ENCODE measurements at regions of chr20 and their contacts with region 1.

Region 1: GRCh38 chr20:4607287-4607713 is 114.4 kb upstream of the PRND start:
- DNase-seq: no peak
- H3K4me3 ChIP-seq: no peak overlapping the region
- H3K27ac ChIP-seq: peak overlapping the region in 3 of 4 donors; percentile 38 to 84 (median 50)
- H3K4me1 ChIP-seq: peaks cover 0 to 49% (median 27%) of the 10 kb centered on the region in 4 donors
- H3K27me3 ChIP-seq: no peaks in the 10 kb centered on the region
- CTCF ChIP-seq: peak; percentile 93 to 97 (median 94)
- EP300 ChIP-seq: no peak
- POLR2A ChIP-seq: no peak

Region 2: DNA sequence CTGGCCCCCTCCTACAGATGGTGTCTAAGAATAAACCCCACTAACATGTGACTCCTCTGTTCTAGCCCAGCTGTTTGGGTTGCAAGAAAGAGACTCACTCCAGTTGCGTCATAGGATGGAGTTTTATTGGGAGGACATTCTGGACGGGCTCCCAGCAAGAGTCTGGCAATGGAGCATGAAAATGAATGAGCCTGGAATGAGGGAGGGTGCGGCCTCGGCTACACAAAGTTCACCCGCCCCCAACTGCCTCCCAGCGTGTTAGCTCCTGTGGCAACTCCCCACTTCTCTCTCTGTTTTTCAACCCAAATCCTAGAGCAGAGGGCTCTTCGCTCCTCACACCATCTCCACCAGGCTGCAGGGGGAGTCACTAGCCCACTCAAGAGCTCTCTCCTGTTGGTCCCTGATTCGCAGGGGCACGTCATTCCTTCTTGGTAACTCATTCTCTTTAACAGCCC is 920.4 kb before region 1 on chr20:
- intact Hi-C with region 1: loop called (anchors 10 kb)
- DNase-seq: peak; percentile 97
- H3K4me3 ChIP-seq: no peak overlapping the region
- H3K27ac ChIP-seq: peak overlapping the region; percentile 77 to 89 (median 79)
- H3K4me1 ChIP-seq: peaks cover 0 to 38% (median 30%) of the 10 kb centered on the region in 4 donors
- H3K27me3 ChIP-seq: no peaks in the 10 kb centered on the region
- CTCF ChIP-seq: no peak
- EP300 ChIP-seq: peak; percentile 69 to 95 (median 74)
- POLR2A ChIP-seq: no peak

Region 3: DNA sequence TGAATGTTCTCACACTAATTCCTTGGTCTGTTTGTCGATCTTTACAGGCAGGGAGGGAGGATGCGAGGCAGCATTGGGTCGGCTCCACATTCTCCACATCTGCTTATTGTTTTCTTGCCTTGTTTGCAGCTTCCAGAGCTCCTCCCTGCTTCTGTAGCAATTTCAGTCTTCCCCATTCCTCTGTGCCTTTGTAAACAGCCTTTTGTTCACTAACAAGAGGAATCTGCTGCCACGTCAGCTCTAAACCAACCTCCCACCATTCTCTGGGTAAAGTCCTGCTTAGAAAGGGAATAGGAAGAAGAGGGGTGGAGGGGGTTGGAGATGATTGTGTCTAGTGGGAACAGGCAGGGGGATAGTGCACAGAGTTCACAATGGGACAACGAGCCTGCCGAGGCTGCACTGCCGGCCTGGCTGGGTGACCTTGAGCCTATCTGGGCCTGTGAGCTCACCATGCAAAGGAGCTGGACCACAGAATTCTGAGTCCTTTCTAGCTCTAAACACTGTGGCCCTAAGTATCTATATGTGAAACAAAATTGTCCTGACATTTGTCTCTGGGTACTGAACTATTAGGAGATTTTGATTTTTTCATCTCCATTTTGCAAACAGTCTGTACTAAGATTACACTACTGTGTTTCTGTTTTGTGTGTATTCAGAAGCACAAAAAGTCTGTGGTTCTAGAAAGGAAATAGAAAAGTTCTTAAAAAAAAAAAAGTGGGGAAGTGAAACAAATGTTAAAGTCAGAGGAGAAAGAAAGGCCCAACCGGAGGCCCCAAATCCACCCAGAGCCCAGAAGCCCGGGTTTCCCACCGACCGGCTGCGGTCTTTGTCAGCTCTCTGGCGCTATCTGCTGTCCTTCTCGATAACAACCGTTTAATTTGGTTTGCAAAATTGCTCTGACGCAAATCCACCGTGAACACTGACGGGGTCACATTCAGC is 113.0 kb after region 1 on chr20:
- intact Hi-C with region 1: loop called (anchors 1 kb)
- DNase-seq: peak; percentile 92
- H3K4me3 ChIP-seq: no peak overlapping the region
- H3K27ac ChIP-seq: peak overlapping the region; percentile 48 to 79 (median 76)
- H3K4me1 ChIP-seq: peaks cover 0 to 27% (median 20%) of the 10 kb centered on the region in 4 donors
- H3K27me3 ChIP-seq: no peaks in the 10 kb centered on the region
- CTCF ChIP-seq: peak; percentile 59 to 85 (median 65)
- EP300 ChIP-seq: no peak
- POLR2A ChIP-seq: no peak

Region 4: DNA sequence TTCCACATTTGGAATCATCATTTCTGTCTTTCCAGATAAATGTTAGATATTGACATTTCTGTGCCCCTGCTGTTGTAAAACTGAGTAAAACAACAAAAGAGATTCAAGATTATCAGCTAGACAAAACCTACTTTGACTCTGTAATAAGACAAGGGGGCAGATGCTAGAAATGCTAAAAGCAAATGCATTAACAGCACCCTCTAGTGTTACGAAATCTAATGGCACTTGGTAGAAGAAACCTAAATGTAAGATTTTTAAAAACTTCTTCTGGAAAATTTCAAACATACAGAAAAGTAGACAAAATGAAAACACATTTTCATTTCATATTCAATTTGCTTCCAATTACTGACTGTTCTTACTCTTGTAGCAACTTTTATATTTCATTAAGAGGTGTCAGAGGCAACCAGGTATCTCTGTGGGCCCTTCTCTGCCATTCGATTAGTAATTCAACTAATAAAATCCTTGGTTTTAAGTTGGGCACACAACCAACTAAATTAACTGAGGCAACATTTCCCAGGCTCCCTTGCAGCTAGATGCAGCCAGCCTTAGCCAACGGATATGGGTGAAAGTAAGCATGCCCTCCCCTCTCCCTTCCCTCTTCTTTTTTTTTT is 349.0 kb after region 1 on chr20:
- intact Hi-C with region 1: loop called (anchors 5 kb)
- DNase-seq: no peak
- H3K4me3 ChIP-seq: no peak overlapping the region
- H3K27ac ChIP-seq: no peak overlapping the region
- H3K4me1 ChIP-seq: peaks cover 0 to 5% (median 5%) of the 10 kb centered on the region in 4 donors
- H3K27me3 ChIP-seq: no peaks in the 10 kb centered on the region
- CTCF ChIP-seq: peak; percentile 35 to 78 (median 67)
- EP300 ChIP-seq: no peak
- POLR2A ChIP-seq: no peak

Region 5: DNA sequence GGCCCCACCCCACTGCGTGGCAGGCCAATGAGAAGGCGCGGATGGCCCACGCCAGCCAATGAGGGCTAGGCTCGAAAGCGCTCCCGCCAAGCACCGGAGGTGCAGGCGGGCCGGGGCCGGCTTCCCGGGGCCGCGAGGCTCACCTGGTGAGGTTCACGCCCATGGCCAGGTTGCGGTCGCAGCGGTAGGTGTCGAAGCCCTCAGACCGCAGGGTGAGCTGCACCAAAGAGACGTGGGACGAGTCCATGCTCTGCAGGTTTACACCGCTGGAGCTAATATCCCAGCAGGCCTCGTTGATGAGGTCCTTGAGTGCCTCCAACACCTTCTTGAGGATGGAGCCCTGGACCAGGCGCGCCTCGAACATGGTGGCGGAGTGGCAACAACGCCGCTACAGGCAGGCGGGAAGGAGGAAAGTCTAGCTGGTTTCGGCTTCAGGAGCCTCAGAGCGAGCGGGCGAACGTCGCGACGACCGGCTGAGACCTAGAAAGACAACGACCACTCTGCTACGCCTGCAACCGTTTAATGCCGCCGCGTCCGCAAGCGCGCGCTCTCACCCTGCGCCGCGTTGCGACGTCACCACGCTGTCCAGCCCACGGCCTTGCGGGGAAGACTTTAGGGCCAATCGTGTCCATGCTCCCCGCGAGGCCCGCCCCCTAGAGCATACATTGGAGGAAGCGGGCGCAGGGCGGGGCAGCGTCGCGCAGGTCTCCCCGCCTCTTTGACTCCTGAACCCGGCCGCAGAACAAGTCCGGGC is 512.3 kb after region 1 on chr20 and contains the start of gene PCNA:
- intact Hi-C with region 1: no loop called
- DNase-seq: peak; percentile 99
- H3K4me3 ChIP-seq: peak within 1 kb of the TSS; percentile 67 to 81 (median 76)
- H3K27ac ChIP-seq: peak within 1 kb of the TSS; percentile 92 to 97 (median 93)
- H3K4me1 ChIP-seq: peaks cover 0 to 24% (median 21%) of the 10 kb centered on the region in 4 donors
- H3K27me3 ChIP-seq: no peaks in the 10 kb centered on the region
- CTCF ChIP-seq: no peak
- EP300 ChIP-seq: no peak
- POLR2A ChIP-seq: peak; percentile 67 to 86
- total RNA-seq, gene PCNA: 24.6 to 54.8 (median 40.0) TPM